Activated CD4-positive, alpha-beta T cell treated with anti-CD3 and anti-CD28 coated beads for 36 hours (primary cell): ENCODE measurements at regions of chr14 and their contacts with region 1.

Region 1: DNA sequence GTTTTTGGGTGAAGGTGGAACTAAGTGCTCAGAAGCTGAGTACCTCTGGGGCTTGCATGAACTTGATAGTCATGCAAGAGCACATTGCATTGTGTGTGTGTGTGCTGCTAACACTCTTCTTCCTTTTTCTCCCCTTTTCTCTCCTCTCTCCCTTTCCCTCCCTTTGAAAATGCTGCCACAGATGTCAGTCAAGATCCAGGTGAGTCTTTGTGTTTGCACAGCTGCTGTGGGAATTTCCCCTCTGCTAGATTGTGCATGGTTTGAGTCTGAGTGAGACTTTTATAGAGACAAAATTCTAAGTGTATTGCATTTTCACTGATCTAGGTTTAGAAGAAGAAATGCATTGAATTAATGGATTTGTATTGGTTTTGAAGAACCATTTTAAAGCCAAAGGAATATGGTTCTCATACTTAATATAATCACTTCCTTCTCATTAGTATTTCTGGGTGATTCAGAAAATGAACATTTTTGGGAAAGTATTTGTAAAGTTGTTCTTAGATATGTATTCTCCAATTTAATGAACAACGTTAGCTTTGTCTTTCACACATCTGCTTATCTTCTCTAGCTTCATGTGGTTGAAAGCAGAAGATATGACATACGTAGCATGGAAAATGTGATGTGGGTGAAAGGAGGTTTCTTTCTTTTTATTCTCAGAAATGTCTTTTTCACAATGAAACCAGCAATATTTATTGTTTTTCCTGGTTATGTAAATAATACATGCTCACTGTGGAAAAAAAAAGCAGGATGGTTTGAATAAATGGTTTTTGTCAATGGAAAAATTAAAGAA is 108.5 kb downstream of the NRXN3 start:
- DNase-seq: no peak
- ATAC-seq: no peak
- H3K4me3 Mint-ChIP-seq: no peak overlapping the region
- H3K27ac Mint-ChIP-seq: no peak overlapping the region
- H3K4me1 Mint-ChIP-seq: peaks cover 3% of the 10 kb centered on the region
- H3K27me3 Mint-ChIP-seq: peaks cover 15% of the 10 kb centered on the region

Region 2: DNA sequence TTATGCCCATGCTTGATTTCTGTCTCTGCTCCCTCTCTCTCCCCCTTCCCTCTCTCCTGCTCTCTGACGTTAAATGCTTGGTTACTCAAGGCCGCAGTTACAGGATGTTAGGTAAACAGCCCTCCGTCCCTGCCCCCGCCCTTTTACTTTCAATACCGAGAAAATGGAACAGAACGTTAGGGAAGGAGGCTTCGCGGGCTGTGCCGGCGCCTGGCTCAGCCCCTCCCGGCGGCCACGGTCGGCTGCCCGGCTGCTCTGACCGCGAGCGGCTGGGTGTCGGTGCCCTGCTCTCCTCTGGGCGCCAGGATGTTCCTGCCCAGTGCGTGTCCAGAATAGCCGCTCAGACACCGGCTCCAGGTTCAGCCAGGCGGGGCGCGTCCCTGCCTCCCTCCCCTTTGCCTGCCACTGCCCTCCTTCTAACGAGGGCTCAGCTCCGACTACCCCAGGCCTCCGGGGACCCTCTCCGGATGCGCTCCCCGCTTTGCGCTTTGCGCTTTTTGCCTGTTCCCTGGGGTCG is 312.7 kb before region 1 on chr14:
- CTCF ChIA-PET with region 1: no interaction called
- POLR2A ChIA-PET with region 1: no interaction called
- intact Hi-C with region 1: no loop called
- DNase-seq: peak; percentile 39
- ATAC-seq: peak; percentile 60
- H3K4me3 Mint-ChIP-seq: no peak overlapping the region
- H3K27ac Mint-ChIP-seq: no peak overlapping the region
- H3K4me1 Mint-ChIP-seq: peaks cover 3% of the 10 kb centered on the region
- H3K27me3 Mint-ChIP-seq: peaks cover 28% of the 10 kb centered on the region

Region 3: DNA sequence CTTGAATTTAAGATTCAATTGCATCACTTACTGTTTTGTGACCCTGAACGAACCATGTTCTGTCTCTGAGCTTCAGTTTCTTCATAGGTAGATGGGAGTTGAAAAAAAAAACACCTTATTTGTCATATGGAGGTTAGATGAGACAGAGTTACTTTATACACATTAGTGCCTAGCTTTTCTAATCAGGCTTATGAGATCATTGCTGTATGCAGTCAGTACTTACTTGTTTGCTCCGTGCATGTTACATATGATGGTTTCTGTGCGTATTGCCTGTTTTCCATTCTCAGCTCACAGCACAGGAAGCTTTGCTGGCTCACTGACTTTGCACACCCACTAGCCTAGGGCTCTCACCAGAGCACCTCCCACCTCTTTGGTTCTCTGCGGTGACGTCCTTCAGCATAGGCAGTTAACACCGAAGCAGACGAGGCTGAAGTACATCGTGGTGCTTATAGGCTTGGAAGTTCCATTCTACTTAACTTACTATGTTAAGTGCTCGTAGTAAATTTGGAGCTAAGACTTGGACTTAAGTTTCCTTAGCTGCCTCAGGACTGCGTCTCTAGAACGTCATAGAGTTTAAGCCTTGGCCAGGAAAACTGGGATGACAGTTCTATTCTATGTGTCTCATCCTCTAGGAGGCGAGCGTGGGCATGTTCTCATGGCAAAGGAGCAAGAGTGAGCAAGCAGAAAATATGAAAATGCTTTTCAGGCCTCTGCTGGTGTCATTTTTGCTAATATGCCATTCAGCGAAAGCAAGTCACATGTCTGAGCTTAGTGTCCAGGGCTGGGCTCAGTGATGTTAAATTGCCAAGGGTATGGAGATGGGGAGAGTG is 51.2 kb before region 1 on chr14:
- CTCF ChIA-PET with region 1: no interaction called
- POLR2A ChIA-PET with region 1: no interaction called
- intact Hi-C with region 1: loop called in 1 of 2 experiments (anchors 2 kb)
- DNase-seq: no peak
- ATAC-seq: no peak
- H3K4me3 Mint-ChIP-seq: no peak overlapping the region
- H3K27ac Mint-ChIP-seq: no peak overlapping the region
- H3K4me1 Mint-ChIP-seq: peaks cover 11% of the 10 kb centered on the region
- H3K27me3 Mint-ChIP-seq: peaks cover 15% of the 10 kb centered on the region

Region 4: GRCh38 chr14:78319887-78320635 is 41.4 kb after region 1 on chr14:
- CTCF ChIA-PET with region 1: no interaction called
- POLR2A ChIA-PET with region 1: no interaction called
- intact Hi-C with region 1: no loop called
- DNase-seq: no peak
- ATAC-seq: no peak
- H3K4me3 Mint-ChIP-seq: no peak overlapping the region
- H3K27ac Mint-ChIP-seq: no peak overlapping the region
- H3K4me1 Mint-ChIP-seq: no peaks in the 10 kb centered on the region
- H3K27me3 Mint-ChIP-seq: peaks cover 22% of the 10 kb centered on the region